Aorta (tissue), 5 donors: ENCODE measurements at regions of chr16 and their contacts with region 1.

Region 1: DNA sequence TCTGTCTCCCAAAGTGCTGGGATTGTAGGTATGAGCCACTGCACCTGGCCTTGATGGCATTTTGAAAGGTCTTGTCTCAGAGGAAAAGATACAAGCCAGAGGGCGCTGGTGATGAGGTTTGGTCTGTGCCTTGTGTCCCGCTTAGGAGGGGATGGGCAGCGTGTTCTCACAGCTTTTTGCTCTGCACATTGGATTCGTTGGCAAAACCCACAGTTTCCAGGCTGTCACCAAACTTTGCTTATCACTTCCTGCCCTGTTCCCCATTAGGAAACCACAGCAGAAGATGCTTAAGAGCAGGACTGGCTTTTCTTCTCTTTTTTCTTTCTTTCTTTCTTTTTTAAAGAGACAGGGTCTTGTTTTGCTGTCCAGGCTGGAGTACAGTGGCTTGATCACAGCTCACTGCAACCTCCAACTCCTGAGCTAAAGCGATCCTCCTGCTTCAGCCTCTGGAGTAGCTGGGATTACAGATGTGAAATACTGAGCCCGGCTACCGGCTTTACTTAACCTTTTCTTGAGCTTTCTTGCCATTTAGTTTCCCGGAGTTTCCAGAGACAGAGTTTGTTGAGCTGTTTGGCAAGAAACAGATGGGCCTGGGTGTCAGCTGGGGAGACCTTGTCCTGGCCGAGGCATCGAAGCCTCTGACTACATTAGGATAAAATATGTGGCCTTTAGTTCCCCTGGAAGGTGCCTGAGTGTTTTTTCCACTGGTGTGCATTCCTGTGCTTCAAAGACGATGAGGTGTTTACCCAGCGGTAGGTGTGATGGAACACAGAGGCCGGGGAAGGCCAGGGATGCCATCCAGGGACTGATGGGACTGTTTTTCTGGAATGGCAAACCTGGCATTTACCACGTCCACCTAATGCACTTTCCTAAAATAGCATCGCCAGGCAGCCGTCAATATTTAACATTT is 112.9 kb downstream of the ABCC1 start:
- DNase-seq: no peak
- ATAC-seq: no peak
- H3K4me3 ChIP-seq: no peak overlapping the region
- H3K27ac ChIP-seq: peak overlapping the region in 1 of 2 donors; percentile 81
- H3K4me1 ChIP-seq: peaks cover 0 to 2% of the 10 kb centered on the region in 2 donors
- H3K27me3 ChIP-seq: no peaks in the 10 kb centered on the region

Region 2: DNA sequence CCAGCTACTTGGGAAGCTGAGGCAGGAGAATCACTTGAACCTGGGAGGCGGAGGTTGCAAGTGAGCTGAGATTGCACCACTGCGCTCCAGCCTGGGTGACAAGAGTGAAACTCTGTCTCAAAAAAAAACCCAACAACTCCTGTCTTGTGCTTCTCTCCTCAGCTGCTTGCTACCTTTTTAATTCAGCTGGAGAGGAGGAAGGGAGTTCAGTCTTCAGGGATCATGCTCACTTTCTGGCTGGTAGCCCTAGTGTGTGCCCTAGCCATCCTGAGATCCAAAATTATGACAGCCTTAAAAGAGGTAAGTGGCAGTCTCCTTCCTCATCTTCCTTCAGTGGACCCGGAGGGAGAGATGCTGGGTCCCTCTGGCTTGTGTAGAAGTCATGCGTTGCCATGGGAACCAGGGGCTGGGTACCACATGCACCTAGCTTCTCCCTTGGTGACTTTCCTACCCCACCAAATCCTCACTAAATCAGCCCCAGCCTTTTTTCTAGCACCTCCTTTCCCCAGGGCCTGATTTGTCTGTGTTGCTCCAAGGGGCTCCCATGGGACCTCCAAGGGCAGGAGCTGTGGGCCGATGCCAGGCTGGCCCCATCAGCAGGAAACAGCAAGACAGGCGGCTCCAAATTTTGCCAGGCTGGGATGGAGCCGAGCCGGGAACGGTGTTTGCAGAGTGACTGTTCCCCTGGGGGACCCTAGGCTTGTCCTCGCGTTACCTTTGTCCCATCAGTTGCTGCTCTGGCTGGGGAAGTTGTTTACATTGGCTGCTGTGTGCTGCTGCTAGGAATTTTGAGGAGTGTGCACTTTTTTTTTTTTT is 47.7 kb before region 1 on chr16:
- intact Hi-C with region 1: loop called in 1 of 2 experiments (anchors 10 kb)
- DNase-seq: peak; percentile 92 to 94
- ATAC-seq: peak; percentile 90
- H3K4me3 ChIP-seq: no peak overlapping the region
- H3K27ac ChIP-seq: peak overlapping the region in 1 of 2 donors; percentile 43
- H3K4me1 ChIP-seq: no peaks in the 10 kb centered on the region
- H3K27me3 ChIP-seq: no peaks in the 10 kb centered on the region

Region 3: GRCh38 chr16:16120382-16121184 is 58.3 kb after region 1 on chr16:
- intact Hi-C with region 1: loop called (anchors 5 kb)
- DNase-seq: peak in 1 of 2 donors; percentile 57
- ATAC-seq: peak; percentile 13
- H3K4me3 ChIP-seq: no peak overlapping the region
- H3K27ac ChIP-seq: no peak overlapping the region
- H3K4me1 ChIP-seq: no peaks in the 10 kb centered on the region
- H3K27me3 ChIP-seq: no peaks in the 10 kb centered on the region